ENCODE measurements at regions of chr12 and their contacts with region 1.

Region 1: GRCh38 chr12:47837190-47838171 is 17.8 kb upstream of the HDAC7 start:
- DNase-seq: peak; percentile 78
- H3K4me3 ChIP-seq: no peak overlapping the region
- H3K27ac ChIP-seq: peak overlapping the region in 1 of 4 donors; percentile 15
- H3K4me1 ChIP-seq: peaks cover 0 to 13% (median 0%) of the 10 kb centered on the region in 4 donors
- H3K27me3 ChIP-seq: no peaks in the 10 kb centered on the region
- CTCF ChIP-seq: peak; percentile 90 to 97 (median 92)
- EP300 ChIP-seq: no peak
- POLR2A ChIP-seq: no peak

Region 2: GRCh38 chr12:47715393-47715876 is 122.0 kb before region 1 on chr12:
- in situ Hi-C with region 1: loop called in 2 of 4 experiments (anchors 5 to 10 kb)
- intact Hi-C with region 1: loop called (anchors 5 kb)
- DNase-seq: peak; percentile 84
- H3K4me3 ChIP-seq: no peak overlapping the region
- H3K27ac ChIP-seq: peak overlapping the region; percentile 5 to 93 (median 88)
- H3K4me1 ChIP-seq: peaks cover 24 to 36% (median 26%) of the 10 kb centered on the region in 4 donors
- H3K27me3 ChIP-seq: no peaks in the 10 kb centered on the region
- CTCF ChIP-seq: peak; percentile 72 to 84 (median 77)
- EP300 ChIP-seq: no peak
- POLR2A ChIP-seq: no peak

Region 3: GRCh38 chr12:47742253-47742825 is 95.1 kb before region 1 on chr12:
- in situ Hi-C with region 1: loop called in 2 of 4 experiments (anchors 25 kb)
- intact Hi-C with region 1: no loop called
- DNase-seq: peak; percentile 79
- H3K4me3 ChIP-seq: no peak overlapping the region
- H3K27ac ChIP-seq: peak overlapping the region in 1 of 4 donors; percentile 35
- H3K4me1 ChIP-seq: peaks cover under 1 to 34% (median 16%) of the 10 kb centered on the region in 4 donors
- H3K27me3 ChIP-seq: no peaks in the 10 kb centered on the region
- CTCF ChIP-seq: peak; percentile 97 to 99 (median 98)
- EP300 ChIP-seq: no peak
- POLR2A ChIP-seq: no peak

Region 4: DNA sequence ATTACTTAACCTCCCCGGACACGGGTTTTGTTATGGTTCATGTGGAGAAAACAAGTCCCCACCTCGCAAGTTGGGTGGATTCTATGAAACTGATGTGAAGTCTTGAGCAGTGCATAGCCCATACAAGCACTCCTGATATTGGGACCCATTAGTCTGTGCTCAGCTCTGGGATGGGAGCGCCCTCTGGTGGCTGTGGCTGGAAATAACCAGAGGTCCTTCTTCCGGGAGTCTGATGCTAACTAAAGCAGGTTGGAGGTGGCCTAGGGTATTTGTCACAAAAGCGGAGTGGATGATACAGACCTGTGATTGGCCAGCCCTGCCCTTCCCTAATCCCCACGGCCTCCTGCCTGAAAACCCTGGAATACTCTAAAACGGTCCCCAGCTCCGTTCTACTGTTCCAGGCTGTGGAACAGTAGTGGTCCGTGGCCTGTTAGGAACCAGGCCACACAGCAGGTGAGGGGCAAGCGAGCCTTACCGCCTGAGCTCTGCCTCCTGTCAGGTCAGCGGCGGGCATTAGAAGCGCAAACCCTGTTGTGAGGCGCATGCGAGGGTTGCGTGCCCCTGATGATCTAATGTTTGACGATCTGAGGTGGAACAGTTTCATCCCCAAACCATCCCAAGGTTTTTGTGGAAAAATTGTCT is 58.1 kb before region 1 on chr12:
- in situ Hi-C with region 1: loop called in 1 of 4 experiments (anchors 10 kb)
- intact Hi-C with region 1: loop called (anchors 2 kb)
- DNase-seq: peak; percentile 91
- H3K4me3 ChIP-seq: no peak overlapping the region
- H3K27ac ChIP-seq: peak overlapping the region in 1 of 4 donors; percentile 55
- H3K4me1 ChIP-seq: peaks cover 26 to 45% (median 31%) of the 10 kb centered on the region in 4 donors
- H3K27me3 ChIP-seq: no peaks in the 10 kb centered on the region
- CTCF ChIP-seq: peak; percentile 93 to 97 (median 95)
- EP300 ChIP-seq: no peak
- POLR2A ChIP-seq: no peak

Region 5: GRCh38 chr12:48069241-48069640 is 231.8 kb after region 1 on chr12:
- in situ Hi-C with region 1: no loop called
- intact Hi-C with region 1: no loop called
- DNase-seq: no peak
- H3K4me3 ChIP-seq: no peak overlapping the region
- H3K27ac ChIP-seq: no peak overlapping the region
- H3K4me1 ChIP-seq: no peaks in the 10 kb centered on the region
- H3K27me3 ChIP-seq: no peaks in the 10 kb centered on the region
- CTCF ChIP-seq: no peak
- EP300 ChIP-seq: no peak
- POLR2A ChIP-seq: no peak

Measured in transverse colon (tissue), 4 donors.